ENCODE measurements at regions of chr15 and their contacts with region 1.

Region 1: GRCh38 chr15:73972984-73973682 is 19.0 kb downstream of the STOML1 start:
- DNase-seq: peak; percentile 66
- ATAC-seq: peak; percentile 93
- H3K4me3 Mint-ChIP-seq: no peak overlapping the region
- H3K27ac Mint-ChIP-seq: no peak overlapping the region
- H3K4me1 Mint-ChIP-seq: peaks cover 18% of the 10 kb centered on the region
- H3K27me3 Mint-ChIP-seq: peaks cover 25% of the 10 kb centered on the region
- CTCF ChIP-seq: peak; percentile 20

Region 2: DNA sequence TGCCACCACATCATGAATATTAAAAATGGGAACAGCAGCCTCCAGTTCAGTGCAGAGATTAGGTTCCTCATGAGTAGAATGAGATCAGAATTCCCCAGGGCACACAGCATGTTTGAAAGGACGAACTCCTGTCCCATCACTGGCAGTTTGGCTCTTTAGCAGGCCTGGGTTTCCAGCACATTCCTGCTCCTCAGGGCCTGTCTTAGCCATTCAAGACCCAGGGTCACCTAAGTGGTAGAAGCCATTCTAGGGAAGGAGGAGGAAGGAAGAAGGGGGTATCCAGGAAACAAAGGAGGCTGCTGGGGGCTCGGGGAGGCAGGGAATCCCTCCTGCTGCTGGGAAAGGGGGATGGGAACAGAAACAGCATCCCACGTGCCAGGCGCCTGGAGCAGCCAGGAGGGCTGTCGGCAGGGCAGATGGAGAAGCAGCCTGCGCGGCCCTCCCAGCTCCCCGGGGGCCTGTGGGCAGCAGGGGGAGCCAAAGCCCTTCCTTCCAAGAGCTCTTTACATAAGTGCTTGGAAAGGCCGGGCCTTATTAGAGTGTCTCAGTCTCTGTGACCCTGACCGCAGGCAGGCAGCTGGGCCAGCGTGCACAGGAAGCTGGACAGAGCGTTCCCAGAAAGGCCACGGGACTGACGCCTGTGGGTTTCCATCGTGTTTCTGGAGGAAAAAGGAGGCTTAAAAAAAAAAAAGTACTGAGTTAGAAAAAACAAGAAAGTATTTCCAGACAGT is 22.1 kb before region 1 on chr15:
- CTCF ChIA-PET with region 1: interaction called, 10 read pairs
- POLR2A ChIA-PET with region 1: no interaction called
- intact Hi-C with region 1: no loop called
- DNase-seq: peak; percentile 45
- ATAC-seq: peak; percentile 62
- H3K4me3 Mint-ChIP-seq: no peak overlapping the region
- H3K27ac Mint-ChIP-seq: no peak overlapping the region
- H3K4me1 Mint-ChIP-seq: peaks cover 11% of the 10 kb centered on the region
- H3K27me3 Mint-ChIP-seq: peaks cover 2% of the 10 kb centered on the region
- CTCF ChIP-seq: no peak

Region 3: GRCh38 chr15:74036271-74037170 is 63.4 kb after region 1 on chr15:
- CTCF ChIA-PET with region 1: interaction called, 40 read pairs
- POLR2A ChIA-PET with region 1: interaction called, 4 read pairs
- intact Hi-C with region 1: loop called (anchors 2 kb)
- DNase-seq: no peak
- ATAC-seq: no peak
- H3K4me3 Mint-ChIP-seq: no peak overlapping the region
- H3K27ac Mint-ChIP-seq: no peak overlapping the region
- H3K4me1 Mint-ChIP-seq: no peaks in the 10 kb centered on the region
- H3K27me3 Mint-ChIP-seq: no peaks in the 10 kb centered on the region
- CTCF ChIP-seq: no peak

Region 4: GRCh38 chr15:74127260-74127953 is 154.3 kb after region 1 on chr15:
- CTCF ChIA-PET with region 1: interaction called, 3 read pairs
- POLR2A ChIA-PET with region 1: no interaction called
- intact Hi-C with region 1: loop called (anchors 2 kb)
- DNase-seq: peak; percentile 83
- ATAC-seq: peak; percentile 79
- H3K4me3 Mint-ChIP-seq: peak overlapping the region; percentile 61
- H3K27ac Mint-ChIP-seq: no peak overlapping the region
- H3K4me1 Mint-ChIP-seq: peaks cover 68% of the 10 kb centered on the region
- H3K27me3 Mint-ChIP-seq: peaks cover 41% of the 10 kb centered on the region
- CTCF ChIP-seq: peak; percentile 71

Region 5: DNA sequence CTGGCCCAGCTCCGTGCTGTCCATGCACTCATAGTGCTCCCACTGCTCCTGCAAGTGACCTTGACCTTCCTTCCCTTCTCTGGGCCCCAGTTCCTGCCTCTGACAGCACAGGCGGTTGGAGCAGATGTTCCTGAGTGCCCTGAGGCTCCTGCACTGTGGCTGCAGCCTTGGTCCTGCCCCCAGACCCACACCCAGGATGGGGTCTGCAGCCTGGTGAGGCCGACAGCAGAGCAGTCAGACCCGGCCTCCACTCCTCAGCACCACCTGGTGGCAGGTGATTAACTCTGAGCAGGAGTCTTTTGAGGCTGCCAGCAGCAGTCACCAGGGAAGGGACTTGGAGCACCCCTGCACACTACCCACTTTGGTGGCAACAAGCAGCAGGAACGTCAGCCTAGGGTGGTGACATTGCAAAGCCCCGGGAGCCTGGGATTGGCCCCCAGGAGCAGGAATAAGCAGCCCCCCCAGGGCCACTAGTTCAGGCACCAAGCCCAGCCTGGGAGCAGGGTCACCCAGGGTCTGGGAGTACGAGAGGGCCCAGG is 329.8 kb after region 1 on chr15:
- CTCF ChIA-PET with region 1: interaction called, 5 read pairs
- POLR2A ChIA-PET with region 1: no interaction called
- intact Hi-C with region 1: loop called (anchors 1 kb)
- DNase-seq: peak; percentile 37
- ATAC-seq: peak; percentile 31
- H3K4me3 Mint-ChIP-seq: no peak overlapping the region
- H3K27ac Mint-ChIP-seq: no peak overlapping the region
- H3K4me1 Mint-ChIP-seq: no peaks in the 10 kb centered on the region
- H3K27me3 Mint-ChIP-seq: peaks cover 49% of the 10 kb centered on the region
- CTCF ChIP-seq: no peak

Region 6: GRCh38 chr15:74396445-74397238 is 423.5 kb after region 1 on chr15:
- CTCF ChIA-PET with region 1: no interaction called
- POLR2A ChIA-PET with region 1: no interaction called
- intact Hi-C with region 1: no loop called
- DNase-seq: peak; percentile 72
- ATAC-seq: peak; percentile 66
- H3K4me3 Mint-ChIP-seq: peak overlapping the region; percentile 80
- H3K27ac Mint-ChIP-seq: peak overlapping the region; percentile 99
- H3K4me1 Mint-ChIP-seq: peaks cover 100% of the 10 kb centered on the region
- H3K27me3 Mint-ChIP-seq: no peaks in the 10 kb centered on the region
- CTCF ChIP-seq: no peak

Measured in activated B cell treated with CpG ODN at 0.5 μM for 24 hours (primary cell).